ENCODE measurements at regions of chr12 and their contacts with region 1.

Region 1: GRCh38 chr12:40107098-40107802 is 1.4 kb upstream of the SLC2A13 start:
- DNase-seq: peak; percentile 86 to 91
- H3K4me3 ChIP-seq: peak overlapping the region in 1 of 3 donors; percentile 5
- H3K27ac ChIP-seq: no peak overlapping the region
- H3K4me1 ChIP-seq: peaks cover 4 to 8% of the 10 kb centered on the region in 2 donors
- H3K27me3 ChIP-seq: no peaks in the 10 kb centered on the region
- CTCF ChIP-seq: peak; percentile 67 to 97 (median 72)
- POLR2A ChIP-seq: no peak

Region 2: DNA sequence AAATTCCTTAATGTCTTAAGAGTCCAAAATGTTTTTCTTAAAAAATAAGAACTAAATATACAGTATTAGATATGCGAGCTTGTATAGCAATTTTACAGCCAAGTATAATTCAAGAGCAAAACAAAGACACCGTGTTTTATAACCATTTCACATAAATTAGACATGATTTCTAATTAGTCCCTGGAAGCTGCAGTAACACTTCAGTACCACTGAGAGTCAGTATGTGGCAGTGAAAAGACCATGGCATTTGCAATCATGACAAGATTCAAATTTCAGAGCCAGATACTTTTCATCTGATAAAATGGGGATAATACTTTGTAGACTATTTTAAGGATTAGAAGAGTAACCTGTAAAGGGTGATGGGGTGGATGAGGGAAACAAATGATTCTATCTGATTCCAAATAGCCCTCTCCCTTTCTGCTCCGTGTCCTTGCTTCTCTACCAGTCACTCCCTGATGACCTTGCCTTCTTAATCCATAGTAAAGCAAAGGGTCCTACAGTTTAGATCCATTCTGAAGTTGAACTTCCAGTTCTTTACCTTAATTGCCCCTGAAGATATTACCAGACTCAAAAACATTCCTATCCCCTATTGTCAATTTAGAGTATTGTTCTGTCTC is 342.2 kb before region 1 on chr12:
- intact Hi-C with region 1: loop called (anchors 10 kb)
- DNase-seq: no peak
- H3K4me3 ChIP-seq: no peak overlapping the region
- H3K27ac ChIP-seq: no peak overlapping the region
- H3K4me1 ChIP-seq: no peaks in the 10 kb centered on the region
- H3K27me3 ChIP-seq: no peaks in the 10 kb centered on the region
- CTCF ChIP-seq: peak; percentile 12 to 58 (median 27)
- POLR2A ChIP-seq: no peak

Region 3: GRCh38 chr12:39958377-39958776 is 148.9 kb before region 1 on chr12:
- intact Hi-C with region 1: no loop called
- DNase-seq: no peak
- H3K4me3 ChIP-seq: no peak overlapping the region
- H3K27ac ChIP-seq: no peak overlapping the region
- H3K4me1 ChIP-seq: no peaks in the 10 kb centered on the region
- H3K27me3 ChIP-seq: no peaks in the 10 kb centered on the region
- CTCF ChIP-seq: no peak
- POLR2A ChIP-seq: no peak

Region 4: DNA sequence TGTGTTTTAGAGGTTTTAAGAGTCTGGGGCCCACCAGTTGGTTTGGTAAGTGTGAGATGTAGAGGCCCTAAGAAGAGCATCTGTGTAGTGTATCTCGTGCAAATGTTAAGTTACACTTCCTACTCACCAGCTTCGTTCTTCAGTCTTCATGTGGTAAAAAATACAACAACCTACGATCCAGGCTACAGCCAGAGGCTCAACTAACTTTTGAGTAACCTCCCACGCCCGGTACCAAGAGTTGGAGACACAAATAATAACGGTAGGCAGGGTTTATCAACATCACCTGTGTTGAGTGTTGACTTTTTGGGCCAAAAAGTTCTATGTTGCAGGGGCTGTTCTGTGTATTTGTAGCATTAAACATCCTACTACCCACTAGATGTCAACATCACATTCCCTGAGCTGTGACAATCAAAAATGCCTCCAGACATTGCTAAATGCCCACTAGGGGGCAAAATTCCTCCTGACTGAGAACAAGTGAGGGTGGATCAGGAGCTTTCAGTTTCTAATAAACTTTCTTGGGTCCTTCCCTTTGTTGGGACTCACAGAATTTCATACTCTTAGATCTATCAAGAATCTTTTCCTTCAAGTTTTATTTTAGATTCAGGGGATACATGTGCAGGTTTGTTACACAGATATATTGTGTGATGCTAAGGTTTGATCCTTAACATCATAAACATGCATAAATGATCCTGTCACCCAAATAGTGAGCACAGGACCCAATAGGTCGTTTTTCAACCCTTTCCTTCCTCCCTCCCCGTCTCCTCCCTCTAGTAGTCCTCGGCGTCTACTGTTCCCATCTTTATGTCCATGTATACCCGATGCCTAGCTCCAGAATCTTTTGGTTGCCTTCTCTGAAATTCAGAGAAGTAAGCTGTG is 96.1 kb before region 1 on chr12:
- intact Hi-C with region 1: loop called (anchors 5 kb)
- DNase-seq: peak; percentile 30 to 33
- H3K4me3 ChIP-seq: no peak overlapping the region
- H3K27ac ChIP-seq: no peak overlapping the region
- H3K4me1 ChIP-seq: no peaks in the 10 kb centered on the region
- H3K27me3 ChIP-seq: no peaks in the 10 kb centered on the region
- CTCF ChIP-seq: peak; percentile 35 to 75 (median 56)
- POLR2A ChIP-seq: no peak

Region 5: GRCh38 chr12:40870981-40871380 is 763.7 kb after region 1 on chr12:
- intact Hi-C with region 1: no loop called
- DNase-seq: no peak
- H3K4me3 ChIP-seq: no peak overlapping the region
- H3K27ac ChIP-seq: no peak overlapping the region
- H3K4me1 ChIP-seq: no peaks in the 10 kb centered on the region
- H3K27me3 ChIP-seq: no peaks in the 10 kb centered on the region
- CTCF ChIP-seq: no peak
- POLR2A ChIP-seq: no peak

Measured in thyroid gland (tissue), 4 donors.